Ascending aorta (tissue), 2 donors: ENCODE measurements at regions of chr18 and their contacts with region 1.

Region 1: DNA sequence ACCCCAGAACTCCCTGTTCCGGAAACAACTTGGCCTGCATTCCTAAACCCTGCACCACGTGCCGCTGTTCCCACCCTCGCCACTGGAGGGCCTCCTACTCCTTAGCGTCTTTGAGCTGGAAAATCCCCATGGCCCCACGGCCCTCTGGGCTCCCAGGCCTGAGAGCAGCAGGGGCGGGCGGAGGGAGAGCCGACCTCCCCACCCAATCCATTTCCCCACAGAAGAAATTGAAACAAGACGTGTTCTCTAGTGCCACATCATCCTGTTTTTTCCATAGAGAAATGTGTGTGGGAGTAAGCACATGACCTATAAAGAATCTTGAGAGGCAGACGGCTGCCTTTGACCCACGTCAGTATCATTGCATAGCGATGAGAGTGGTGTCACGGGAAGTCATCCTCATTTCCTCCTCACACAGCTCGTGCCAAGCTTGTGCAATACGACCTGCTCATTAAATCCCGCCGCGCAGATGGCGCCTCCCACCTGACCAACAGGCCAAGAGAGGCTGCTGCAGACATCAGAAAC is 79.2 kb downstream of the LAMA1 start:
- DNase-seq: peak in 1 of 2 donors; percentile 88
- H3K4me3 ChIP-seq: peak overlapping the region in 1 of 2 donors; percentile 10
- H3K27ac ChIP-seq: no peak overlapping the region
- H3K4me1 ChIP-seq: no peaks in the 10 kb centered on the region
- H3K27me3 ChIP-seq: no peaks in the 10 kb centered on the region
- CTCF ChIP-seq: peak; percentile 35 to 54 (median 40)

Region 2: DNA sequence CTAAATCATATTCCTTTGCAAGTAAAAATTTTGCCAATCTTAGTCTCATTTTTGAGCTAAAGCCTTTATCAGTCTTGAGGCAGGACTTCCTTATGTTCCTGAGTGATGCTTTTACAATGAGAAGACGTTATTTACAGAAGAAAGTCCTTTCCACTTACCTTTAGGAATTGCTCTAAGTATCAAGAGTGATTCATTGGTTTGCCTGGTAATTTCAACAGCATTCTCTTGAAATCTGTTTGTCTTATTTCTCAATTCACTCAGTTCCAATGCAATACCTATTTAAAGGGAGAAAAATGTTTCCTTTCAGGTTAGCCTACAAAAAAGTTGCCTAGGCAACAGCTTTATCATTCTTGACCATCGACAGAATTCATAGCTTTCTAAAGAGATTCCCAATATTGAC is 58.0 kb before region 1 on chr18:
- intact Hi-C with region 1: no loop called
- DNase-seq: no peak
- H3K4me3 ChIP-seq: no peak overlapping the region
- H3K27ac ChIP-seq: no peak overlapping the region
- H3K4me1 ChIP-seq: no peaks in the 10 kb centered on the region
- H3K27me3 ChIP-seq: no peaks in the 10 kb centered on the region
- CTCF ChIP-seq: no peak

Region 3: DNA sequence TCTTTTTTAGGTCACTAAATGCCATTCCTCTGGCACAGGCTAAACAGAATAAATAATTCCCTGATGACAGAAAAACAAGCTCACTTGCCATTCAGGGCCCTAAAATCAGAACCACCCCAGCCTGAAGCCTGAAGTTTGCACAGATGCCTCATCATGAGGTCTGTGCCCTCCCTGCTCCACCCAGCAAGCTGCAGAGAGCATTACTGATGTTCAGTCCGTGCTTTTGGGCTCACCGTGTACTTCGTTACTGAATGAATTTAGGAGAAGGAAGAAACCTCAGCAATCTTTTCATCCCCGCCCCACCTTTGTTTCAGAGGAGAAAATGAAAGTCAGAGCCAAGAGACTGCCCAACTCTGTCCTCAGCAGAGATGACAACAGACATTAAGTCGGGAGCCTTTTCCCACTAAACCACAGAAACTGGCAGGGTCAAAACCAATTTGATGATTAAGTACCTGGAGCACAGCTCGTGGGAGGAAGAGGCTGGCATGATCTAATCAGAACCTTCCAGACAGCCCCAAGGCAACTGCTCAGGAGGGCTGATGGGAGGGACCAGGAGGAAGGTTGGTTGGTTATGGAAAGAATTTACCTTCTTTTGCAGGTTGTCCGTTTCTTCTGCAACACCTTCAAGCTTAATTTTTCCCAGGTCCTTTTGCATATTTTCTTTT is 43.5 kb before region 1 on chr18:
- intact Hi-C with region 1: no loop called
- DNase-seq: no peak
- H3K4me3 ChIP-seq: no peak overlapping the region
- H3K27ac ChIP-seq: no peak overlapping the region
- H3K4me1 ChIP-seq: no peaks in the 10 kb centered on the region
- H3K27me3 ChIP-seq: no peaks in the 10 kb centered on the region
- CTCF ChIP-seq: no peak

Region 4: DNA sequence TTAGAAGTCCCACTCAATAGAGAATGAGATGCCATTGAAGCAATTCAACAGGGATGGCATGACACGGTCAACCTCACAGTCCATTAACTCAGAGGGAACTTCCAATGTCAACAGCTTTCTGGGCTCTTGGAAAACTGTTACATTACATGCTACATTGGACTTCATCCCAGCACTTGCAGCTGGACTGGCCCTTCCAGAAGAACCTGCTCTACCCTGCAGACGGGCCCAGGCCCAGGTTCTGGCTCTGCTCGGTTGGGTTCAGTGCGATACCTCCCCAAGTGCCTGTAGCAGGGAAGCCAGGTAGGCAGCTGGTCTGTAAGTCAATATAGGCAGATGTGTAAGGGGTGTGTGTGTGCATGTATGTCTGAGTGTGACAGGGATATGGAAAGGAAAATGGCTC is 66.3 kb after region 1 on chr18:
- intact Hi-C with region 1: loop called (anchors 10 kb)
- DNase-seq: no peak
- H3K4me3 ChIP-seq: no peak overlapping the region
- H3K27ac ChIP-seq: no peak overlapping the region
- H3K4me1 ChIP-seq: no peaks in the 10 kb centered on the region
- H3K27me3 ChIP-seq: no peaks in the 10 kb centered on the region
- CTCF ChIP-seq: no peak

Region 5: GRCh38 chr18:7177116-7177744 is 138.8 kb after region 1 on chr18:
- intact Hi-C with region 1: loop called (anchors 1 kb)
- DNase-seq: no peak
- H3K4me3 ChIP-seq: no peak overlapping the region
- H3K27ac ChIP-seq: no peak overlapping the region
- H3K4me1 ChIP-seq: no peaks in the 10 kb centered on the region
- H3K27me3 ChIP-seq: no peaks in the 10 kb centered on the region
- CTCF ChIP-seq: peak; percentile 21 to 65 (median 50)